ENCODE measurements at regions of chr7 and their contacts with region 1.

Region 1: DNA sequence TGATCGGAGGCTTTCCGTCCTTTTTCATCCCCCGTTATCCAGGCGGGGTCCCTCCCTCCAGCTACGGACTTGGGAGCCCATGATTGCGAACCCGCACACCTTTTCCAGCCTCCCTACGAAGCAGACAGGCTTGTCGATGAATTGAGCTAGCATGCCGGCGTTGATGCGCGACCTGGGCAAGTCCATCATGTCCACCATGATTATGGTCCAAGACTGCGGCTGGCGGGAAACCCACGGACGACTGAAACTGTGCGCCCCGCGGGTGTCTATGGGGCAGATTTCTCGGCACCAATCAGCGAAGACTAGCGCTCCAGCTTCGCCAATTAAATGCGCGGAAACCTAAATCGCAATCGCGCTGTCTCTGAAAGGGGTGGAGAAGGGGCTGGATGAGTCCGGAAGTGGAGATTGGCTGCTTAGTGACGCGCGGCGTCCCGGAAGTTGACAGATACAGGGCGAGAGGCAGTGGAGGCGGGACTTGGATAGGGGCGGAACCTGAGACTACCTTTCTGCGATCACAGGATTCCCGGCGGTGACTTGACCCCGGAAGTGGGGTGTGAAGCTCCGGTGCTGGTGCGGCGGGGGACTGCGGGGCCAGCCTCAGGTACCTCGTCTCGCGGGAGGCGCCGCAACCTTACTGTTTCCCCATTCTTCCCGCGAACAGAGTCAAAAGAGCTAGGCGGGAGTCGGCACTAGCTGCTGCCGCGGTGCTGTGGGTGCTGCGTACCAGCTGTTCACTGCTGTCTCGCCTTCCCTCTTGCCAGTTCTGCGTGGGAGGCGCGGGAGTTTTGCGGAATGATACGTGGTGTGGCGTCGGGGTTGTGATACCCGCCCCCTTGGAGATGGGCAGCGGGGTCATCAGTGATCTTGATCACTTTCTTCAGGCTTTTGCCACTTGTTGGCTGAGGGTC is at the start of gene UMAD1:
- DNase-seq: peak; percentile 99
- ATAC-seq: peak; percentile 95
- H3K4me3 Mint-ChIP-seq: peak within 1 kb of the TSS; percentile 89
- H3K27ac Mint-ChIP-seq: peak within 1 kb of the TSS; percentile 99
- H3K4me1 Mint-ChIP-seq: peaks cover 37% of the 10 kb centered on the region
- H3K27me3 Mint-ChIP-seq: no peaks in the 10 kb centered on the region
- CTCF ChIP-seq: no peak
- total RNA-seq, gene UMAD1: 10.1 to 11.1 TPM

Region 2: DNA sequence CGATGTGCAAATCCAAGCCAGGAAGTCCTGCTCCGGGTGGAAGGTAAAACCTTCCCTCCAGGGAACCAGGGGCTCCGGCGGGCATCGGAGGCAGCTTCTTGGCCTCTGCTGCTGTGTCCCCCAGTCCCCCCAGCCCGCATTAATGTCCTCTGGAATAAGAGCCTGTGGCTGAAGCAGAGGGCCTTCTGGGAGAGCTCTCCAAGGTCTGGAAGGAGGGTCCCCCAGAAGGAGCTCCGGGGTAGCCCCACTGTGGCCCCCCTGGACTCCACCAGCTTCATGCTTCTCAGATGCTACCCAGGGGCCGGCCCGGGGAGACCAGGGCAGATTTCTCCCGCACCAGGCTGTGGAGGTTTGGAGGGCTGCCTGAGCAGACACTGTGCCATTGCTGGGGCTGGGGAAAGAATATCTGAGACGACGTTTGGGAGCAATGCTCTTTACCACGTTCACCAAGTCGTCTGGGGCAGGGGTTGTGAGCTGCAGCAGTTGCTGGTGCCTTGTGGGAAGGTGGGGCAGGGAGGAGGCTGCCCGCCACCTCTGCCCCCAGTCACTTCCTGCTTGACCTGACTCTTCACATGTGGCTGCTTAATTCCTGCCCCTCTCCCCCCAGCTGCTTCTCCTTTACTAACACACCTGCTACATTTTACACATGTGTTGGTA is 1016.8 kb before region 1 on chr7:
- CTCF ChIA-PET with region 1: no interaction called
- POLR2A ChIA-PET with region 1: no interaction called
- intact Hi-C with region 1: no loop called
- DNase-seq: peak; percentile 45
- ATAC-seq: peak; percentile 70
- H3K4me3 Mint-ChIP-seq: peak overlapping the region; percentile 53
- H3K27ac Mint-ChIP-seq: peak overlapping the region; percentile 86
- H3K4me1 Mint-ChIP-seq: peaks cover 39% of the 10 kb centered on the region
- H3K27me3 Mint-ChIP-seq: no peaks in the 10 kb centered on the region
- CTCF ChIP-seq: no peak

Region 3: GRCh38 chr7:7554021-7554432 is 86.4 kb before region 1 on chr7:
- CTCF ChIA-PET with region 1: no interaction called
- POLR2A ChIA-PET with region 1: no interaction called
- intact Hi-C with region 1: no loop called
- DNase-seq: no peak
- ATAC-seq: no peak
- H3K4me3 Mint-ChIP-seq: no peak overlapping the region
- H3K27ac Mint-ChIP-seq: no peak overlapping the region
- H3K4me1 Mint-ChIP-seq: no peaks in the 10 kb centered on the region
- H3K27me3 Mint-ChIP-seq: no peaks in the 10 kb centered on the region
- CTCF ChIP-seq: no peak

Region 4: DNA sequence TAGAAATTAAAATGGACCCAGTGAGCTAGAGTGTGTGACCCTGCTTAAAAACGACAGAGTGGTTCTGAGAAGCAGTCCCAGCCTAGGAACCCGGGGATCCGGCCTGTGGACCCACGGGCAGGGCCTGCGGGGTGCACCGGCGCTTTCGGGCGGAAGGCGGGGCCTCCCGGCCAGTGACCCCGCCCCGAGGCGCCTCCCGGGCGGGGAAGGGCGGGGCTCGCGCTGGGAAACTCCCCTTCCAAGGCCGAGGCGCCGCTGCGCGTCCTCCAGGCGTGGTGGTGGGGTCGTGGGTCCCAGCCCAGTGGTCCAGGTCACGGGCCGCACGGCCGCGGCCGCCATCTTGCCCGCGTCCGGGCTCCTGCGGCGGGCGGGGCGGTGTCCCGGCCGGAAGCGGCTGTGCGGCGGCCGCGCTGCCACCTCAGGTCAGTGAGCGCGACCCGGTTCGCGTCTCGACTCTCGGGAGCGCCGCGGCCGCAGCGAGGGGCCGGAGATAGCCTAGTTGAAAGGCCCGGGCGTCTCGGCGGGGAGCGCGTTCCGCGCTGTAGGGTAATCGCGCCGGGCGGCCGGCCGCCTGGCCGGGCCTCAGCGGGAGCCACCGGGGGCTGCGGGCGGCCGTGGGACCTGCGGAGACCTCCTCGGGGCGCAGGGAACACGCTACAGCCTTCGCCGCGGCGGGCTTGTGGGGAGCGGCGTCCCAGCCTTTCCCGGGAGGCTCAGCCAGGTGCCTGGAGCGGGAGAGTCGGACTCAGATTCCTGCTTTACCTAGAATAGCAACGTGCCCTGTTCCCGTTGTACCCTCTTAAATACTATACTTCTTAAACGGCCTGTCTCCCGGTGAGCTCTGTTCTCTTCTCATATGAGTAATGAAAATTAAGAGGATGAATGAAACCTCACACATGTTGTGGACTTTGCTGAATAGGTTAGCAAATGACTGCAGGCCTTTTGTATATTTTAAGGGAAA is 73.5 kb before region 1 on chr7 and contains the start of gene MIOS:
- CTCF ChIA-PET with region 1: no interaction called
- POLR2A ChIA-PET with region 1: interaction called, 4 read pairs
- intact Hi-C with region 1: loop called (anchors 5 kb)
- DNase-seq: peak; percentile 80
- ATAC-seq: peak; percentile 88
- H3K4me3 Mint-ChIP-seq: peak within 1 kb of the TSS; percentile 87
- H3K27ac Mint-ChIP-seq: peak within 1 kb of the TSS; percentile 96
- H3K4me1 Mint-ChIP-seq: peaks cover 22% of the 10 kb centered on the region
- H3K27me3 Mint-ChIP-seq: no peaks in the 10 kb centered on the region
- CTCF ChIP-seq: no peak
- total RNA-seq, gene MIOS: 63.0 to 67.3 TPM

Region 5: DNA sequence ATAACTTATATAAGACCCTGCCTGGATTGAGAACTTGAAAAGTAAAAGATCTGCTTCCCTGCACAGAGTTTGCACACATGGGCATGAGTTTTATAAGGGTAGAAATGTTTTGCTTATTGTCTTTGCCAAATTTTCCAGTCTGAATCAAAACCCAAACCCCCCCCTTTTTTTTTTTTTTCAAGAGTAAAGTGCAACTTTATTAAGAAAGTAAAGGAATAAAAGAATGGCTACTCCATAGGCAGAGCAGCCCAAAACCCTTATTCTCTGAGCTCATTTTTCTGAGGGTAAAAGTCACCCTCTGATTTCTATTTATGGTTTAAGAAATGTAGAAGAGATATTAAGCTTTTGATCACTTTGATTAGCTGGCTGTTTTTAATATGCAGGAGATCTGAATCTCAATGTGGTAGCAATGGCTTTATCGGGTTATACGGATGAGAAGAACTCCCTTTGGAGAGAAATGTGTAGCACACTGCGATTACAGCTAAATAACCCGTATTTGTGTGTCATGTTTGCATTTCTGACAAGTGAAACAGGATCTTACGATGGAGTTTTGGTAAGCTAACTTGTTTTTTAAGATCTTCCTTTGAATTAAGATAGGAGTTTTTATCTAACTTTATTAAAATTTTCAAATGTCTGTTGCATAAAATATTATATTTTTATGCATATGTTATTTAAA is 55.1 kb before region 1 on chr7:
- CTCF ChIA-PET with region 1: no interaction called
- POLR2A ChIA-PET with region 1: no interaction called
- intact Hi-C with region 1: no loop called
- DNase-seq: no peak
- ATAC-seq: no peak
- H3K4me3 Mint-ChIP-seq: no peak overlapping the region
- H3K27ac Mint-ChIP-seq: no peak overlapping the region
- H3K4me1 Mint-ChIP-seq: peaks cover 9% of the 10 kb centered on the region
- H3K27me3 Mint-ChIP-seq: no peaks in the 10 kb centered on the region
- CTCF ChIP-seq: no peak

Region 6: DNA sequence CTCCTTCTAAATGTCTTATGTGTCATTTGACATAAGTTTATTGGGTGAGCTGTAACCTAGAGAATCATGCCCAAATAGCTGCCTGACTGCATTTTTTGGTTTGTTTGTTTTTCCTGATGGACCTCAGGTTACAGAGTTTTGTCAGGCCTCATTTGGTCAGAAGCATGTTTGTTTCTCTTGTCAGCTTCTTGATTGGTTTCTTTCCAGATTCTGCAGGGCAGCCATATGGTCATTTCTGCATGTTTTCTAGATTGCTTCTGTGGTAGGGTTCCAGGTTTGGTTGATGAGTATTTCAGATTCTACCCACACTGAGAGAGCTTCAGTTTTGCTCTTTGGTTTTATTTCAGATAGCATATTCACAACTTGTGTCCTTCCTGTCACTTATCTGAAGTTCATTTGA is 356.1 kb after region 1 on chr7:
- CTCF ChIA-PET with region 1: no interaction called
- POLR2A ChIA-PET with region 1: no interaction called
- intact Hi-C with region 1: loop called (anchors 10 kb)
- DNase-seq: no peak
- ATAC-seq: peak; percentile 64
- H3K4me3 Mint-ChIP-seq: no peak overlapping the region
- H3K27ac Mint-ChIP-seq: peak overlapping the region; percentile 87
- H3K4me1 Mint-ChIP-seq: peaks cover 21% of the 10 kb centered on the region
- H3K27me3 Mint-ChIP-seq: no peaks in the 10 kb centered on the region
- CTCF ChIP-seq: no peak